CD8-positive, alpha-beta T cell (primary cell): ENCODE measurements at regions of chr11 and their contacts with region 1.

Region 1: GRCh38 chr11:61392981-61393595 is 701 bp downstream of the TMEM216 start:
- DNase-seq: peak in 6 of 9 experiments; percentile 9 to 59 (median 34)
- ATAC-seq: peak; percentile 47
- H3K4me3 ChIP-seq: peak overlapping the region; percentile 57 to 84
- H3K4me3 Mint-ChIP-seq: peak overlapping the region; percentile 96
- H3K27ac ChIP-seq: peak overlapping the region; percentile 70 to 90
- H3K27ac Mint-ChIP-seq: peak overlapping the region; percentile 99
- H3K4me1 ChIP-seq: peaks cover 8% of the 10 kb centered on the region
- H3K4me1 Mint-ChIP-seq: peaks cover 22% of the 10 kb centered on the region
- H3K27me3 ChIP-seq: no peaks in the 10 kb centered on the region
- H3K27me3 Mint-ChIP-seq: no peaks in the 10 kb centered on the region
- CTCF ChIP-seq: peak; percentile 28

Region 2: DNA sequence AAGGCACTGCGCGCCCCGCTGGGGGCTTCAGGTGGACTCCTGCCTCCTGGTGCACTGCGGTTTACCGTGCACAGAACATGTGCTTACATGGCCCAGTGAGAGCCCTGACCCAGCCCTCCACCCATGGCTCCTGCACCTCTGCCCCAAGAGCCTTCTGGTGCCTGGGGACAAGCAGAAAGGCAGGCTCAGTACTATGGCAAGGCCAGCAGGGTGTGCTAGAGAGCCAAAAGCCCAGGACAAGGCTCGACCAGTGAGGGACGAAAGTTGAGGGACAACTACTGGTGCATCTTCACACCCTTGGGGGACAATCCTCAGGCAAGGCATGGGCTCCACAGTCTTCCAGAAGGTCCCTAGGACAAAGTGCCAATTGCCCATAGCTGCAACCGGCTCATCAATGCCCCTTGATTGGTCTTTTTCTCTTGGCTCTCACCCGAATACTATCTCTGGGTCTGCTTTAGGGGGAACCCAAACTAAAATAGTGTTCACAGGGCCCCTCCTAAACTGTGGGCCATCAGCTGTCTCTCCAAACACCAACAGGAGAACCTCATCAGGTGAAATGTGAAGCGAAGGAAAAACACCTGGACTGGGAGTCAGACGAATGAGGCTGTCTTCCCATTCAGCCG is 138.6 kb before region 1 on chr11:
- CTCF ChIA-PET with region 1: interaction called, 46 read pairs
- POLR2A ChIA-PET with region 1: no interaction called
- intact Hi-C with region 1: no loop called
- DNase-seq: peak; percentile 31 to 70 (median 58)
- ATAC-seq: peak; percentile 91
- H3K4me3 ChIP-seq: no peak overlapping the region
- H3K4me3 Mint-ChIP-seq: no peak overlapping the region
- H3K27ac ChIP-seq: no peak overlapping the region
- H3K27ac Mint-ChIP-seq: no peak overlapping the region
- H3K4me1 ChIP-seq: no peaks in the 10 kb centered on the region
- H3K4me1 Mint-ChIP-seq: no peaks in the 10 kb centered on the region
- H3K27me3 ChIP-seq: no peaks in the 10 kb centered on the region
- H3K27me3 Mint-ChIP-seq: no peaks in the 10 kb centered on the region
- CTCF ChIP-seq: peak; percentile 70

Region 3: GRCh38 chr11:61361686-61362541 is 31.2 kb before region 1 on chr11 and contains the starts of genes CYB561A3 and TMEM138:
- CTCF ChIA-PET with region 1: interaction called, 11 read pairs
- POLR2A ChIA-PET with region 1: interaction called, 27 read pairs
- intact Hi-C with region 1: loop called (anchors 1 to 2 kb)
- DNase-seq: peak; percentile 68 to 93 (median 87)
- ATAC-seq: peak; percentile 84
- H3K4me3 ChIP-seq: peak within 1 kb of the TSS; percentile 94 to 98
- H3K4me3 Mint-ChIP-seq: peak within 1 kb of the TSS; percentile 98
- H3K27ac ChIP-seq: peak within 1 kb of the TSS; percentile 87 to 98
- H3K27ac Mint-ChIP-seq: peak within 1 kb of the TSS; percentile 98
- H3K4me1 ChIP-seq: peaks cover 20% of the 10 kb centered on the region
- H3K4me1 Mint-ChIP-seq: peaks cover 37% of the 10 kb centered on the region
- H3K27me3 ChIP-seq: no peaks in the 10 kb centered on the region
- H3K27me3 Mint-ChIP-seq: no peaks in the 10 kb centered on the region
- CTCF ChIP-seq: no peak
- total RNA-seq, gene CYB561A3: 23.1 to 28.1 TPM
- total RNA-seq, gene TMEM138: 60.7 to 62.5 TPM

Region 4: DNA sequence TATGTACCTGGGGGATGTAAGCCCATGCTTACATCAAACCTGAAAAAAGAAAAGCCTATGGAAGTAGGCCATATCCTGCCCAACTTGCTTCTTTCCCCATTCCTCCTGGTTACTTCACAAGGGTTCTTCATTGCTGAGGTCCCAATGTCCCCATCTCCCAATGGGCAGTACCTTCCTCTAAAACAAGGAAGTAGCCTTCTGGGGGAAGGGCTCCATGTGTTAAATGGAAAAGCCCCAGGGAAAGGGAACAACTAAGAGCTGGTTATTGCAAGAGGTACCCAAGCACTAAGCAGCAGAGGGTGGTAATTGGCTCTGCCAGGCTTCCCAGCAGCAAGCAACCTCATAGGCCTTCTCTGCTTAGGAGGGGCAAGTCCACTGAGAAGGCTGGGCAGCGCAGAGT is 10.6 kb after region 1 on chr11:
- CTCF ChIA-PET with region 1: interaction called, 10 read pairs
- POLR2A ChIA-PET with region 1: interaction called, 11 read pairs
- intact Hi-C with region 1: no loop called
- DNase-seq: no peak
- ATAC-seq: no peak
- H3K4me3 ChIP-seq: no peak overlapping the region
- H3K4me3 Mint-ChIP-seq: no peak overlapping the region
- H3K27ac ChIP-seq: no peak overlapping the region
- H3K27ac Mint-ChIP-seq: no peak overlapping the region
- H3K4me1 ChIP-seq: no peaks in the 10 kb centered on the region
- H3K4me1 Mint-ChIP-seq: peaks cover 3% of the 10 kb centered on the region
- H3K27me3 ChIP-seq: no peaks in the 10 kb centered on the region
- H3K27me3 Mint-ChIP-seq: no peaks in the 10 kb centered on the region
- CTCF ChIP-seq: no peak

Region 5: GRCh38 chr11:61417670-61418069 is 24.6 kb after region 1 on chr11:
- CTCF ChIA-PET with region 1: no interaction called
- POLR2A ChIA-PET with region 1: no interaction called
- intact Hi-C with region 1: no loop called
- DNase-seq: peak in 1 of 9 experiments; percentile 21
- ATAC-seq: no peak
- H3K4me3 ChIP-seq: no peak overlapping the region
- H3K4me3 Mint-ChIP-seq: no peak overlapping the region
- H3K27ac ChIP-seq: no peak overlapping the region
- H3K27ac Mint-ChIP-seq: peak overlapping the region; percentile 41
- H3K4me1 ChIP-seq: peaks cover 7% of the 10 kb centered on the region
- H3K4me1 Mint-ChIP-seq: peaks cover 51% of the 10 kb centered on the region
- H3K27me3 ChIP-seq: no peaks in the 10 kb centered on the region
- H3K27me3 Mint-ChIP-seq: no peaks in the 10 kb centered on the region
- CTCF ChIP-seq: no peak

Region 6: DNA sequence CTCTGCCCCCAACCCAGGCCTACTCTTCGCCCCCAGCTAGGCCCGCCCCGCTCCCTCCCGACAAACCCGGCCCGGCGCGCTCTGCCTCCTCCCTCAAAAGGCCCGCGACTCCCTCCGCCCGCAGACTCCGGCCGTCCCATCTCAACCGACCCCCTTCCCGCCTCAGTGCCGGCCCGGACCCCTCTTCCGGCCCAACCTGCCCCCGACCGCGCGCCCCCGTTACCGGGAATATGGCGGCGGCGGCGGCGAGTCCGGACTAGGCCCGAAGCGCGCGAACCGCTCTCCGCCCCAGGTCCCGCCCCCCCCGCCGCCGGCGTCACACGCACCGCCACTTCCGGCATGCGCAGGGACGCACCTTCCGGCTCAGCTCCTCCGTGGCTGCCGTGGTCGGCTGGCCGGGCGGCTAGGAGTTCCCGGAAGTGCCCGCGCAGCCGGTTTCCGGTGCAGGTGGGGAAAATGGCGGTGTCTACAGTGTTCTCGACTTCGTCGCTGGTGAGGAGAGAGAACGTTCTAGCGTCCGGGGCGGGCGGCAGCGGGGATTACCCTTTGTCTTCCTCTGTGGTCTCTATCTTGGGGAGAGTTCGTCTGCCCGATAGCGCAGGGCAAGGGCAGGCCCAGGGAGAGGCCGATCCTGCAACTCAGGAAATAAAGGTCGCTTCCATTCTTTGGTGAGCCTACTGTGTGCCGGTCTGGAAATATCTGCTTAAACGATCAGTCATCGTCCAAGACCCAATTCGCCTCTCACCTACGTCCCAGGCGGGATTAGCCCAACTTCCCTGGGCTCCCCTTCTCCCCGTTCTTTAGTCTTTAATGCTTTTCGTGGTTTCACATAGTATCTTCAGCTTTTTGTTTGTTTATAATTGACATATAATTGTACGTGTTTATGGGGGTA is 36.8 kb after region 1 on chr11 and contains the starts of genes CPSF7 and SDHAF2:
- CTCF ChIA-PET with region 1: interaction called, 10 read pairs
- POLR2A ChIA-PET with region 1: interaction called, 23 read pairs
- intact Hi-C with region 1: loop called in 1 of 2 experiments (anchors 2 kb)
- DNase-seq: peak; percentile 93 to 99 (median 98)
- ATAC-seq: peak; percentile 80
- H3K4me3 ChIP-seq: peak within 1 kb of the TSS; percentile 70 to 95
- H3K4me3 Mint-ChIP-seq: peak within 1 kb of the TSS; percentile 97
- H3K27ac ChIP-seq: peak within 1 kb of the TSS; percentile 98 to 100
- H3K27ac Mint-ChIP-seq: peak within 1 kb of the TSS; percentile 100
- H3K4me1 ChIP-seq: peaks cover 53% of the 10 kb centered on the region
- H3K4me1 Mint-ChIP-seq: peaks cover 72% of the 10 kb centered on the region
- H3K27me3 ChIP-seq: no peaks in the 10 kb centered on the region
- H3K27me3 Mint-ChIP-seq: no peaks in the 10 kb centered on the region
- CTCF ChIP-seq: no peak
- total RNA-seq, gene CPSF7: 106 to 111 TPM
- total RNA-seq, gene SDHAF2: 31.4 to 33.0 TPM